Transverse colon (tissue), 4 donors: ENCODE measurements at regions of chr6 and their contacts with region 1.

Region 1: DNA sequence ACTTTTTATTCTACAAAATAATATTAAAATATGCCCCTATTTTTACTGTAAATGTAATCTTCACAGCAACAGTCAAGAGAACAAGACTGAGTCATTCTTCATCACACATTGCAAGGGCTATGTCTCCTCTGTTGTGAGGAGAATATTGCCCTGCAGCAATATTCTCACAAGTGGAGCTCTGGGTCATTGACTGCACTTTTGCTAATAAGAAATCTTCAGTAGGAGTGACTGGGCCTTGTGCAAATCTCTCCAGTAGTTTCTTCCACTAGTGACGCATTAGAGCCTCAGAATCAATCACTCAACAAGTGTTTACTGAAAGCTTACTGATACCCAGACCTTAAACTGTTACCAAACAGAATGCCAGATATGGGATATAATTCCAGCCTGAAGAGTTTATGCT is 49.1 kb downstream of the LAMA2 start:
- DNase-seq: no peak
- H3K4me3 ChIP-seq: no peak overlapping the region
- H3K27ac ChIP-seq: no peak overlapping the region
- H3K4me1 ChIP-seq: no peaks in the 10 kb centered on the region
- H3K27me3 ChIP-seq: no peaks in the 10 kb centered on the region
- CTCF ChIP-seq: no peak
- EP300 ChIP-seq: no peak
- POLR2A ChIP-seq: no peak

Region 2: GRCh38 chr6:128889870-128890269 is 42.2 kb before region 1 on chr6:
- in situ Hi-C with region 1: no loop called
- intact Hi-C with region 1: loop called (anchors 2 kb)
- DNase-seq: no peak
- H3K4me3 ChIP-seq: no peak overlapping the region
- H3K27ac ChIP-seq: no peak overlapping the region
- H3K4me1 ChIP-seq: no peaks in the 10 kb centered on the region
- H3K27me3 ChIP-seq: no peaks in the 10 kb centered on the region
- CTCF ChIP-seq: no peak
- EP300 ChIP-seq: no peak
- POLR2A ChIP-seq: no peak